AG04449 (cell line): ENCODE measurements at regions of chr1 and their contacts with region 1.

Region 1: DNA sequence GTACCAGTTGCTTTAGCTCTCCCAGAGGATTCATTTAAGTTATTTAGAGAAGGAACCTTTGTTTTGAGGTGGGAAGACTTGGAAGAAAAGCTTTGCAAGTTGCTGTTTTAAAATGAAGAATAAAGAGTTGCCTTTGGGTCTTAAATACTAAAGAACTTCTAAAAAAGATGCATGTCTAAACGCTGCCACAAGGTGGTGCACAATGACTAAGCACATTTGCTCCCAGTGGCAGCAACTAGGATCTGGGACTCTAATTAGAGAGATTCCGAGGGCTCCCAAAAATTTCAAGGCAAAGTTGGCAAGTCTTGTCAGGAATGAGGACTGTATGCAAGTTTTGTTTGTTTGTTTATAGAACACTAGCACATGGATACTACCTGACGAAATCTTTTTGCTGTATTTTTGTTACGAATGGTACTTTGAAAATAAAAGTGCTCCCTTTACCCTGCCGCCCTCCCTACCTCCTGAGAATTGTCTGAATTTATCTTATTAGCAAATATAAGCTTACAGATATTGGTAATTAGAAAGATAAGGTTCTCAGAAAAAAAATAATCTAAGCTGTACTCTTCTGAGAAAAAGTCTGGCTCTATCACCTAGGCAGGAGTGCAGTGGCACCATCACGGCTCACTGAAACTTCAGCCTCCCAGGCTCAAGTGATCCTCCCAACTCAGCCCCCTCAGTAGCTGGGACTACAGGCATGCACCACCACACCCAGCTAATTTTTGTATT is 121.8 kb downstream of the HFM1 start:
- DNase-seq: peak; percentile 21
- H3K4me3 ChIP-seq: no peak overlapping the region
- CTCF ChIP-seq: peak; percentile 72

Region 2: DNA sequence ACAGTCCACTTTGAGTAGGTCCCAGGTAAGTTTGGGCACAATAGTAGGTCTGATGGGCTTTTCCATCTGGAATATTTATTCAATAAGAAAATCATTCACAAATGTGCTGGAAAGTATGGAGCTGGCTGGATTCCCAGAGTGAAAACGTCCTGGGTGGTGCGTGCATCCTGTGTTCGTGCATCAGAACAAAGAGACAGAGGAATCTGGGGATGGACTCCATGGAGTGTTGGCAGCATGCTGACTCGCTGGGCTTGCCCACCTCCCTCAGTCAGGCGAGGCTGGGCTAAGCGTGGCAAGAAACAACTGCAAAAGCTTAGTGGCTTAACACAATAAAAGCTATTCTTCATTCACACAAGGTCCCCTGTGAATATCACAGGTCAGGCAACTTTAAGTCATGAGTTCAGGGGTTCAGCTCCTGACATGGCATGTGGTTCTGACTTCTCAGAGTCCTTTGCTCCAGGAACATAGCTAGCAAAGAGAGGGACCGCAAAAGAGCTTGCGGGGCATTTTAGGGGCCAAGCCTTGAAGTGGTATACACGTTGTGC is 109.4 kb before region 1 on chr1:
- CTCF ChIA-PET with region 1: interaction called, 107 read pairs
- POLR2A ChIA-PET with region 1: no interaction called
- DNase-seq: no peak
- H3K4me3 ChIP-seq: no peak overlapping the region
- CTCF ChIP-seq: no peak

Region 3: DNA sequence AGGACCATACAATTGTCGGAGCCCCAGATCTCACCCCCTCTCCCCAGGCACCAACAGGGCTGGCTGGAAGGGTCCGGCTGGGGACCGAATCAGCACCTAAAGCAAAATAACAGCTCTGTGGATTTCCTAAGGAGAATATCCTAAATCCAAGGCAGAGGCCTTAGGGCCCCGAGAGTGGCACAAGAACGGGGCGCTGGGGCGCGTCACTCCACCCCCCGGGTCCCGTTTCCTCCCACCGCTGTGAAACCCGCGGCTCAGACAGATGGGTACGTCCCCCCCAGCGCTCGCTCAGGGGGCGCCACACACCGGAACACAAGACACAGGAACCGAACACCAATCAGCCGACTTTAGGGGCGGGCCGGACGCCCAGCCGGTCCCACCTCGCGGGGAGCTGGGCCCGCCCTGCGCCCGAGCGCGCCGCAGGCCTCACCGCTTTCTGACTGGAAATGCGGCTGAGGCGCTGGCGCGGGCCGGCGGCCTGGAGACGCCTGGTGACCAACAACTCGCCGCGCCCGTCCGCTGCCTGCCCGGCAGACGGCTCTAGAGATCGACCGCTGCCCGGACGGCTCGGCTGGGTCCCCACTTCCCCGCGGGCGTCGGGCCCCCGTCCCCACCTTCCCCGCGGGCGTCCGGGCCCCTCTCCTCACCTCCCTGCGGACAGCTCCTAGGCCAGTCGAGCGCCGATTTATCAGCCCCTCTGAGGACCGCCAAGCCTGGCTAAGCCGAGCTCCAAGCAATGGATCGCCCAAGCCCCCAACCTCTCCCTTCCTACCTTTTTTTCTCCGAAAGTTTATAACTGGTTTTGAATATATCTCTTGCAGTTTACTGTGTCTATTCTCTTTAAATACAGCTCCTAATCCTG is 121.5 kb after region 1 on chr1 and contains the start of gene HFM1:
- CTCF ChIA-PET with region 1: interaction called, 14 read pairs
- POLR2A ChIA-PET with region 1: no interaction called
- DNase-seq: no peak
- H3K4me3 ChIP-seq: peak within 1 kb of the TSS; percentile 62
- CTCF ChIP-seq: no peak

Region 4: DNA sequence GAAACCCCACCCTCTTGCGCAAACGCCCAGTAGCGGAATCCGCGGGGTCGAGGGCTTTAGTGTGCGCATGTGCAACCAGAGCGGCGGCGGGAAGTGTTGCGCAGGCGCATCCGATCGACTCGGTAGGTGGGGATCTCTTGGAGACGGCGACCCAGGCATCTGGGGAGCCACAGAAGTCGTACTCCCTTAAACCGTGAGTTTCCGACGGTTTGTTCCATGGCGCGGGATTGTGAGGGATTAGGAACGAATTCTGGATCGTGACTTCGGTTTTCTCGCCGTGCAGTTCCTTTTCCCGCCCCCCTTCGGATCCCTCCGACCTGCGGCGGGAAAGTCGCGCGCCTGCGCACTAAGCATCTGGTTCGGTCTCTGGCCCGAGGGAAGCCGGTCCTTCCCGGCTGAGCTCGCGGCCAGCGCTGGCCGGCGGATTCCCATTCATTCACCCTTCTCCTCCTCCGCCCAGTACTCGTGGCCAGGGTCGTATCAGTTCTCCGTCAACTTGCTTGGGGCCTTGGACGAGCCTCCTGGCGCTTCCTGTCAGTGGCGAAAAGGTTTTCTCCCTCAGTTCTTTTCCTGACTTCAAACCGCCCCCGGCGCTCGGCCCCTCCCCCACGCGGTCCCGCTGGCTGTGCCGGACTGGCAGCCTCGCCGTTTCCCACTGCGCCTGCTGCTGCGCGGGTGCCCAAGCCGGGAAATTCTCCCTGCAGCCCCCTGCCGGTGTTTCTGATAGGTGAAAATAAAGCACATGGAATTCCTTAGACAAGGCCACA is 218.1 kb after region 1 on chr1 and contains the start of gene CDC7:
- CTCF ChIA-PET with region 1: interaction called, 18 read pairs
- POLR2A ChIA-PET with region 1: no interaction called
- DNase-seq: peak; percentile 38
- H3K4me3 ChIP-seq: peak within 1 kb of the TSS; percentile 88
- CTCF ChIP-seq: peak; percentile 53